ENCODE measurements at regions of chr14 and their contacts with region 1.

Region 1: DNA sequence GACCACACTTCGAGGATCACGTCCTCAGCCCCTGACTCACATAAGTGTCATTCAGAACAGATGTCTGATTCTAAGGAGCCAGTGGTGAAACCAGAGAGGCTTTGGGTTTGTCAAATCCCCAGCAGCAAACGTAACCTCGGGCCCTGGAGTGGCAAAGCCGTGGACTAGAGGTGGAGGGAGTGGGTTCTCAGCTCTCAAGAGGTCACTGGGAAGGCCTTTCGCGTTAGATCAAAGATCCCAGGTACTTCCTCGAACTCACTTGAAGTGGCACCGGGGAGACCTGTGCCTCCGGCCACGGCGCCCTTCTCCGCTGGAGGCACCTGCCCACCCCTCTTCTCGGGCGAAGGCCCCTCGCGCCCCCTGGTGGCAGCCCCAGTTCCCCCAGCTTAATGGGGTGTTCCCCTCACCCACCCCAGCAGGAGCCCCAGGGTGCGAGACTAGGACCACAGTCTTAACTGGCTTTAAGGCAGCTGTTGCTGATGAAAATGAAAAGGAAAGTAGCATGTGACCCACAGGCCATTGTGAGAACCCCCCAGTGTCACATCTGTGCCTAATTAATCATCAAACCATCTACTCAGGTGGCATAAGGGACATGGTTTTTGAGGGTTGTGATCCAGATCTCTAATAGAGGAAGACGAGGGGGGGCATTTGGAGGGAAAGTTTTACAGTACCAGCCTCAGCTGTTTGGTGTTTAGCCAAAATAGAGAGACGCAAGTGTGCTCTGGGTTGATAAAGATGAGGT is 672 bp upstream of the ESR2 start:
- DNase-seq: no peak
- H3K4me3 ChIP-seq: peak overlapping the region; percentile 47
- CTCF ChIP-seq: peak; percentile 94

Region 2: GRCh38 chr14:63800651-63801375 is 494.0 kb before region 1 on chr14:
- CTCF ChIA-PET with region 1: interaction called, 65 read pairs
- POLR2A ChIA-PET with region 1: no interaction called
- DNase-seq: no peak
- H3K4me3 ChIP-seq: no peak overlapping the region
- CTCF ChIP-seq: no peak

Region 3: GRCh38 chr14:64026600-64026999 is 268.2 kb before region 1 on chr14:
- CTCF ChIA-PET with region 1: interaction called, 10 read pairs
- POLR2A ChIA-PET with region 1: no interaction called
- DNase-seq: no peak
- H3K4me3 ChIP-seq: no peak overlapping the region
- CTCF ChIP-seq: no peak

Region 4: DNA sequence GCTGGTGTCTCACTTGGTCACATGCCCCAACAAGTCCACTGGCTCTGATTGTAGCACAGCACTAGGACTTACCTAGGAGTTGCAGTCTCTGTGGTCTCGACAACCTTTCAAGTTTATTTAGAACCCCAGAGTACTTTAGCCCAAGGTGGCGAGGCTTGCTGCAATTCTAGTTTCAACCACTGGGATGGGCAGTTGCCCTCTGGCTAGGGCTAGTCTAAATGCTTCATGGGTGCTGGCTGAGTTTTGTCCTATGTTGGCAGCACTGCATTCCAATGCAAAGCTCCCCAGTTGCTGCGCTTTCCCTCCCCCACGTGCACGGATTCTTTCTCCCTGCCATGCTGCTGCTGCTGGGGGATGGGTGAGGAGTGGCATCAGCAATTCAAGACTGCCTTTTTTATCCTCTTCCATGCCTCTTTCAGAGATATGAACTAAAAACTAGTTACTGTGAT is 234.2 kb before region 1 on chr14:
- CTCF ChIA-PET with region 1: interaction called, 20 read pairs
- POLR2A ChIA-PET with region 1: no interaction called
- DNase-seq: no peak
- H3K4me3 ChIP-seq: no peak overlapping the region
- CTCF ChIP-seq: peak; percentile 49

Region 5: GRCh38 chr14:64279704-64280668 is 14.9 kb before region 1 on chr14:
- CTCF ChIA-PET with region 1: interaction called, 22 read pairs
- POLR2A ChIA-PET with region 1: no interaction called
- DNase-seq: no peak
- H3K4me3 ChIP-seq: no peak overlapping the region
- CTCF ChIP-seq: no peak

Region 6: GRCh38 chr14:64556526-64556925 is 261.7 kb after region 1 on chr14:
- CTCF ChIA-PET with region 1: no interaction called
- POLR2A ChIA-PET with region 1: no interaction called
- DNase-seq: peak; percentile 53
- H3K4me3 ChIP-seq: no peak overlapping the region
- CTCF ChIP-seq: no peak